ENCODE measurements at regions of chr2 and their contacts with region 1.

Region 1: DNA sequence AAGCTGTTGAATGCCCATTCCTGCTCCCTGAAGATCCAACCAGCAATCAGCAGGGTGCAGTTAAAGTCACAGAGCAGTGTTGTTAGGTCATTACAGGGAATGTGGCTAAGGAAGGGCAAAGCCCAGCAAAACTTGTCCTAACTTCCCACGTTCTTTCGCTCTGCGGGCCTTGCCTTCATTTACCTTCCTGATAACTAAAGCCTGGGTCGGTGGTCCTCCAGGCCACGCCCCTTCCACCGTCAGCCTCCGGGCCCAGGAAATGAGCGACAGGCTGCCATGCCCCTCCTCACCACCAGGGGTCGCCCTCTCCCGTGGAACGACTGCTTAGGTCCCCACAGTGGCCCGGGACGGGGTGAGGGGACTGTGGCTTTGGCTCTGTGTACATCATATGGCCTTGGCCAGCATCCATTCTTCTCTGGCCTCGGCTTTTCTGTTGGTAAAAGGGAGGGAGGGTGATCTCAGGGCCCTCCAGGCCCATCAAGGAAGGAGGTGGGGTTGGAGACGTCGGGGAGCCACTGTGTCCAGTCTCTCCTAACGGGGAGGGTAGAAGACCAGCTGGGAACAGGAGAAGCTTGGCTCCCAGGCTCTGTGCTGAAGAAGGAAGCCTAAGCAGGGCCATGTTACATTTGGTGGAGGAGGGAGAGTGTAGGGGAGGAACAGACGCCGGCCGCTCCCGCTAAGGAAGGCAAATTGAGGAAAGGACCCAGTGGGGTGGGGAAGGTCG is 2.2 kb downstream of the SH2D6 start:
- DNase-seq: no peak
- ATAC-seq: peak; percentile 82
- H3K4me3 ChIP-seq: no peak overlapping the region
- H3K27ac ChIP-seq: no peak overlapping the region
- H3K4me1 ChIP-seq: peaks cover 8% of the 10 kb centered on the region
- H3K27me3 ChIP-seq: no peaks in the 10 kb centered on the region
- CTCF ChIP-seq: peak; percentile 99; a peak in 5 of 6 replicates
- EP300 ChIP-seq: no peak
- POLR2A ChIP-seq: peak; percentile 33; the same call in 1 of the 2 replicates
- RAD21 ChIP-seq: peak; percentile 98

Region 2: GRCh38 chr2:85367180-85367579 is 53.5 kb before region 1 on chr2:
- CTCF ChIA-PET with region 1: no interaction called
- POLR2A ChIA-PET with region 1: no interaction called
- RAD21 ChIA-PET with region 1: no interaction called
- SMC1A ChIA-PET with region 1: no interaction called
- in situ Hi-C with region 1: no loop called
- intact Hi-C with region 1: no loop called
- DNase-seq: no peak
- ATAC-seq: no peak
- H3K4me3 ChIP-seq: no peak overlapping the region
- H3K27ac ChIP-seq: no peak overlapping the region
- H3K4me1 ChIP-seq: no peaks in the 10 kb centered on the region
- H3K27me3 ChIP-seq: no peaks in the 10 kb centered on the region
- CTCF ChIP-seq: no peak
- EP300 ChIP-seq: no peak
- POLR2A ChIP-seq: no peak
- RAD21 ChIP-seq: no peak

Region 3: GRCh38 chr2:85390941-85391669 is 29.6 kb before region 1 on chr2:
- CTCF ChIA-PET with region 1: interaction called, 40 read pairs
- POLR2A ChIA-PET with region 1: interaction called, 7 read pairs
- RAD21 ChIA-PET with region 1: interaction called, 30 read pairs
- SMC1A ChIA-PET with region 1: interaction called, 11 read pairs
- in situ Hi-C with region 1: no loop called
- intact Hi-C with region 1: loop called (anchors 1 kb)
- DNase-seq: no peak
- ATAC-seq: peak; percentile 81
- H3K4me3 ChIP-seq: no peak overlapping the region
- H3K27ac ChIP-seq: no peak overlapping the region
- H3K4me1 ChIP-seq: peaks cover 7% of the 10 kb centered on the region
- H3K27me3 ChIP-seq: no peaks in the 10 kb centered on the region
- CTCF ChIP-seq: peak; percentile 74 to 89 (median 76)
- EP300 ChIP-seq: no peak
- POLR2A ChIP-seq: no peak
- RAD21 ChIP-seq: peak; percentile 89

Region 4: DNA sequence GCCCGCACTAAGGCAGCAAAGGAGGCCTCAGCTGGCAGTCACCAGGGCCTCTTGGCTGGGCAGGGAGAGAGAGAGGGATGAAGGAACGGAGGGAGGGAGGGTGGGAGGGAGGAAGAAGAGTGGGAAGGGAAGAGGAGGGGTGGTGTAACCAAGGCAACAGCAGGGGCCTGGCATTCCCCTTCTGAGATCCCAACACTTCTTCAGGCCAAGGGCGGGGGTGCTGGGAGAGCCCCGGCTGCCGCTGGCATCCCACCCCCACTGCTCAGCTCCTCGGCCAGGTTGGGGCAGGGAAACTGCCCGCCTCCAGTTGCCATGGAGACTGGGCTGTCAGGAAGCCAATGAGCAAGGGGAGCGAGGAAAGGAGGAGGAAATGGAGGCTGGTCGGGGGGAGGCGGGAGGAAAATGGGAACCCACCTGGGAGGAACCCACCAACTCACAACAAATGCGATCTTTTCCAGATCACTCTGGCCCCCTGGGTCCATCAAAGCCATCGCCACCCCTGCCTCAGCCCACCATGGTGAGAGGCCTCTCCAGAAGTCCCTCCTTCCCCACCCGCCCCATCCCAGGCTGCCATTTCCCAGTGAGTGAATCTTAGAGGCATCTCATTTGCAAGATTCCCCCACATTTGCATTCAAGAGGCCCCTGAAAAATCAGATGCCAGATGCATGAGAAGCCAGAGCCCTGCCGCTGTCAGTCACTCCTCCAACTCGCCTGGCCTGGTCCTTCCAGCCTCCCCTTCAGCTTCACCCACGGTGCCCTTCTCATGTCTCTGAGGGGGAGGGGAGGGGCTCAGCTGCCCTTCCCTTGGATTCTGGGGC is 10.3 kb after region 1 on chr2:
- CTCF ChIA-PET with region 1: interaction called, 17 read pairs
- POLR2A ChIA-PET with region 1: no interaction called
- RAD21 ChIA-PET with region 1: interaction called, 5 read pairs
- SMC1A ChIA-PET with region 1: interaction called, 7 read pairs
- in situ Hi-C with region 1: no loop called
- intact Hi-C with region 1: no loop called
- DNase-seq: no peak
- ATAC-seq: no peak
- H3K4me3 ChIP-seq: no peak overlapping the region
- H3K27ac ChIP-seq: no peak overlapping the region
- H3K4me1 ChIP-seq: no peaks in the 10 kb centered on the region
- H3K27me3 ChIP-seq: no peaks in the 10 kb centered on the region
- CTCF ChIP-seq: no peak
- EP300 ChIP-seq: no peak
- POLR2A ChIP-seq: no peak
- RAD21 ChIP-seq: no peak

Region 5: GRCh38 chr2:85538486-85539360 is 118.0 kb after region 1 on chr2 and contains the start of gene MAT2A:
- CTCF ChIA-PET with region 1: interaction called, 55 read pairs
- POLR2A ChIA-PET with region 1: interaction called, 33 read pairs
- RAD21 ChIA-PET with region 1: interaction called, 23 read pairs
- SMC1A ChIA-PET with region 1: interaction called, 55 read pairs
- in situ Hi-C with region 1: no loop called
- intact Hi-C with region 1: no loop called
- DNase-seq: peak; percentile 56
- ATAC-seq: peak; percentile 81
- H3K4me3 ChIP-seq: peak within 1 kb of the TSS; percentile 86
- H3K27ac ChIP-seq: peak within 1 kb of the TSS; percentile 100
- H3K4me1 ChIP-seq: no peaks in the 10 kb centered on the region
- H3K27me3 ChIP-seq: no peaks in the 10 kb centered on the region
- CTCF ChIP-seq: peak; percentile 65 to 77 (median 74)
- EP300 ChIP-seq: no peak
- POLR2A ChIP-seq: peak; percentile 82
- RAD21 ChIP-seq: no peak
- polyA plus RNA-seq, gene MAT2A: 97.6 to 127 TPM

Region 6: GRCh38 chr2:85551698-85552678 is 131.3 kb after region 1 on chr2:
- CTCF ChIA-PET with region 1: interaction called, 336 read pairs
- POLR2A ChIA-PET with region 1: interaction called, 17 read pairs
- RAD21 ChIA-PET with region 1: interaction called, 179 read pairs
- SMC1A ChIA-PET with region 1: interaction called, 201 read pairs
- in situ Hi-C with region 1: loop called (anchors 5 kb)
- intact Hi-C with region 1: loop called (anchors 1 kb)
- DNase-seq: peak; percentile 56
- ATAC-seq: peak; percentile 91
- H3K4me3 ChIP-seq: no peak overlapping the region
- H3K27ac ChIP-seq: no peak overlapping the region
- H3K4me1 ChIP-seq: no peaks in the 10 kb centered on the region
- H3K27me3 ChIP-seq: no peaks in the 10 kb centered on the region
- CTCF ChIP-seq: peak; percentile 84 to 93 (median 92)
- EP300 ChIP-seq: no peak
- POLR2A ChIP-seq: no peak
- RAD21 ChIP-seq: peak; percentile 95

Region 7: DNA sequence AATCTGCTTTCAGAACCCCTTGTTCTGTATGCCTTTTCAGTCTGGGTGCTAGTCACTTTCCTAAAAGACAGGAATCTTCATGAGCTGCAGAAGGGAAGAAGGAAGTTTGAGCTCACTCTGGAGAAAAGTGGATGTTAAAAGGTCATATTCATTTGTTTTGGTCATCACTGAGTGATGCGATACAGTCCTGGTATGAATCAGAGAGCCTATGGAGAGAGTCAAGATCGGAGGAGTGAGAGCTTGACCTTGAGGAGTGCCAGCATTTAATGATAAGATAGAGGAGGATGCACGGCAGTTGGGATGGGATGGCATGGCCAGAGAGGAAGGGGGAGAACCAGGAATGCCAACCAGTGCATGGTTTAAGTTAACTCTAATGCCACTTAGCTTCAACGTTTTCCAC is 214.9 kb after region 1 on chr2:
- CTCF ChIA-PET with region 1: interaction called, 23 read pairs
- POLR2A ChIA-PET with region 1: no interaction called
- RAD21 ChIA-PET with region 1: interaction called, 4 read pairs
- SMC1A ChIA-PET with region 1: interaction called, 6 read pairs
- in situ Hi-C with region 1: no loop called
- intact Hi-C with region 1: no loop called
- DNase-seq: no peak
- ATAC-seq: no peak
- H3K4me3 ChIP-seq: no peak overlapping the region
- H3K27ac ChIP-seq: no peak overlapping the region
- H3K4me1 ChIP-seq: no peaks in the 10 kb centered on the region
- H3K27me3 ChIP-seq: no peaks in the 10 kb centered on the region
- CTCF ChIP-seq: no peak
- EP300 ChIP-seq: no peak
- POLR2A ChIP-seq: no peak
- RAD21 ChIP-seq: no peak

Region 8: DNA sequence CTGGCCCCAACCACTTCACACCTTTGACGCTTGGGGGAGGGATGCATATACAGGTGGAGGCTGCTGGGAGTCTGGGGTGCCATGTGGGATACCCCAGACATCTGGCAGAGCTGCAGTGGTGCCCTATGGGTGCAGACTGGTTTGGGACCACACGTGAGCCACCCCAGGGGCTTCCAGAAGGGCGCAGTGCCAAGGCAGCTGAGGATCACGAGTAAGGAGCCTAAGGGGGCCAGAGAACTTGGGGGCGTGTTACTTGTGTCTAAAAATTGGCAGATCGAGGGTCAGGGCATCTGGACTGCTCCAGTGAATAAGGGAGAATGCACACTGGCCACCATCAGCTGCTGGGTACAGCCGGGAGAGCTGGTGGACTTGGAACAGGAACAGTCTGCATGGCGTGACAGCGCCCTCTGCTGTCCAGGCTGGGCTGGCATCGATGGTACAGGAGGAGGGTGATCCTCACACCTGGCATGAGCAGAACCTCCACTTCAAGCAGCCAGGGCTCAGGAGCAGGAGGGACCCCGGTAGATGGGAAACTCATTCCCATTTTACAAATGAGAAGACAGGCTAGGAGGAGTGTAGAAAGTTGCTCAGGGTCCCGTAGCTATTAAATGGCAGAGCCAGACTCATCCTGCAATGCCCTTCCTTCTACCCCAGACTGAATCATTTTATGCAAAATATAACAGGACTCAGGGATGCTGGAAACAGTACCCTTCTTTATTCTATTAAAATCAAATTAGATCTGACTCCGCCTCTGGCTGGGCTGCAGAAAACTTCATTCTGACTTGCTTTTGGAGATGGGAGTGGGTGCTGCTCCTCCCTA is 393.5 kb after region 1 on chr2:
- CTCF ChIA-PET with region 1: no interaction called
- POLR2A ChIA-PET with region 1: no interaction called
- RAD21 ChIA-PET with region 1: no interaction called
- SMC1A ChIA-PET with region 1: no interaction called
- in situ Hi-C with region 1: no loop called
- intact Hi-C with region 1: loop called (anchors 10 kb)
- DNase-seq: peak; percentile 30
- ATAC-seq: peak; percentile 99
- H3K4me3 ChIP-seq: no peak overlapping the region
- H3K27ac ChIP-seq: no peak overlapping the region
- H3K4me1 ChIP-seq: no peaks in the 10 kb centered on the region
- H3K27me3 ChIP-seq: no peaks in the 10 kb centered on the region
- CTCF ChIP-seq: peak; percentile 94 to 98 (median 95); a peak in 5 of 6 replicates
- EP300 ChIP-seq: no peak
- POLR2A ChIP-seq: no peak
- RAD21 ChIP-seq: peak; percentile 94

Measured in GM12878 (cell line).